Panc1 (cell line): ENCODE measurements at regions of chr13 and their contacts with region 1.

Region 1: DNA sequence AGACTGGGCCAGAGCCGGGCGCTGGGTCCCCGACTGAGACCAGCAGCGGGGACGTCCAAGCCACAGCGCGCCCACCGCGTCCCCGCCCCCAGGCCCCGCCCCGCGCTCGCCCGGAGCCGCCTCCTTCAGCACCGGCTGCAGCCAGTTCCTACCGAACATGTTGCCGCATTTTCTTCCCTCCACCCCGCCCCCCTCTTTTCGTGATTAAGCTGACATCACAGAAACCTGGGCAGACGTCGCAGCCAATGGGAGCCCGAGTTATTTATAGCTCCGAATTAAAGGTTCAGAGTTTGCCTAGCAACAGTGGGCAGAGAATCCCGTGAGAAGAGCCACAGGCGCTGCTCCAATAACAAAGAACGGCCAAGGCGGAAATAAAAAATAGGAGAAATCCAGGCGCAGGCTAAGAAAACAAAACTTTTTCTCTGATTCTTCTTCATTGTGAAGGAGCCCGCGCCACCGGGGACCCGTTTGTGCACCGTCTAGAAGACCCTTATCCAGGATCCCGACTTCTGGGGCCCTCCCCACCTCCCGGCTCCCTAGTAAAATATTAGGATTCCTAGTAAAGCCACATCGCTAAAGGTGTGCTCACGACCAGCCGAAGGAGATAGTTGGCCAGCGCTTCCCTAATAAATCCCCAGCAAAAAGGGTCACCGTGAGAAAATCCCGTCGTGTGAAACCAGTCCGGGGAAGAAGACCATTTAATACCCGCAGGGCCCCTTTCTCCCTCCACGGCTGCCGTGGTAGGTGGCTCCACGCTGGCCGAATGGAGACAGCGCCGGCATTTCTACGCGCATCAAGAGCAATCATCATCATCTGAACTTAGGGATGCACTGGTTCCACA is 61.7 kb downstream of the SERP2 start:
- DNase-seq: peak; percentile 76
- ATAC-seq: peak; percentile 75
- H3K4me3 ChIP-seq: peak overlapping the region; percentile 61 to 75
- H3K27ac ChIP-seq: peak overlapping the region; percentile 80
- H3K4me1 ChIP-seq: peaks cover 6% of the 10 kb centered on the region; the same call in 1 of the 2 replicates
- H3K27me3 ChIP-seq: no peaks in the 10 kb centered on the region
- CTCF ChIP-seq: no peak

Region 2: GRCh38 chr13:44050450-44051063 is 384.8 kb before region 1 on chr13:
- CTCF ChIA-PET with region 1: no interaction called
- POLR2A ChIA-PET with region 1: no interaction called
- in situ Hi-C with region 1: no loop called
- intact Hi-C with region 1: loop called (anchors 1 kb)
- DNase-seq: no peak
- ATAC-seq: no peak
- H3K4me3 ChIP-seq: no peak overlapping the region
- H3K27ac ChIP-seq: no peak overlapping the region
- H3K4me1 ChIP-seq: no peaks in the 10 kb centered on the region
- H3K27me3 ChIP-seq: no peaks in the 10 kb centered on the region; the same call in none of the 2 replicates
- CTCF ChIP-seq: peak; percentile 65; the same call in 1 of the 2 replicates

Region 3: GRCh38 chr13:44912278-44913016 is 477.1 kb after region 1 on chr13:
- CTCF ChIA-PET with region 1: interaction called, 20 read pairs
- POLR2A ChIA-PET with region 1: no interaction called
- in situ Hi-C with region 1: no loop called
- intact Hi-C with region 1: no loop called
- DNase-seq: no peak
- ATAC-seq: no peak
- H3K4me3 ChIP-seq: no peak overlapping the region
- H3K27ac ChIP-seq: no peak overlapping the region
- H3K4me1 ChIP-seq: no peaks in the 10 kb centered on the region
- H3K27me3 ChIP-seq: no peaks in the 10 kb centered on the region
- CTCF ChIP-seq: no peak